RWPE1 (cell line): ENCODE measurements at regions of chr2 and their contacts with region 1.

Region 1: DNA sequence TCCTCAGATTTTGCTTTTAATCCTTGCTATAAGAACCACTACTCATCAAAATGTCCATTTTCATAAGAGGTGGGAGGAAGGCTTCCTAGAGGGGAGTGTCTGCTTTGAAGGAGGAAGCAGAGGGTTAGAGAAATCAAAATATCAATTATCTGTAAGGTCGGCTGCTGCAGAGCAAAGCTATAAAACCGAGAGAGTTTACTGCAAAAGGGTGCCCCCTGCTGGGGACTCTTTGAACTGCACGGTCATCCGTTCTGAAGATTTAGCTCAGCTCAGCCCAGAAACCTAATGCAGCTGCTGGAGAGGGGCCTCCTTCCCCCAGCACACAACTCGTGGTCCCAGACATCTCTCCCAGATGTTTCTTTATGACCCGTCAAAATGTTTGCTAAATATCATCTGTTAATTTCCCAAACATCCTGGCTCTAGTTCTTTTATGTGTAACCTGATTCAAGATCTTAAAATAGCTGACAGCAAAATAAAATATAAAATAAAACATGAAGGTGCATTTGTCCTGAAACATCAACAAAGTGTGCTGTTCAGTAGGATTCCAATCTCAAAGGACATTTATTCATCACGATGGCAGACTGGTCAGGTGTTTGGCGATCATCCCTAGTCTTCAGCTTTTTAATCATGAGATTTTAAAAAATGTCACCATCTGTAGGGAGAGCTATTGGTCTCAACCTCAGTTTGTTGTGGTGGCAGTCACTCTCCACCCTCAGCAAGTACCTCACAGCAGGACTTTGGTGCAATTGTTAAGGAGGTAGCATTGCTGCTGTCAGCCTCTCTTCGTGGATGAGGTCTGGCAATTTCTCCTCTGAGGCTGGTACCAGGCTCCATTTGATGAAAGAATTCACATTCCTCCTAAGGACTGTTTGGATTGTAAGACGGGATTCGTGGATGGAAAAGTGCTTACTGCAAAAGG is 185.9 kb downstream of the MTX2 start:
- DNase-seq: peak; percentile 46
- H3K27ac ChIP-seq: no peak overlapping the region
- CTCF ChIP-seq: peak; percentile 86

Region 2: GRCh38 chr2:176542476-176542875 is 87.3 kb after region 1 on chr2:
- CTCF ChIA-PET with region 1: no interaction called
- POLR2A ChIA-PET with region 1: no interaction called
- DNase-seq: no peak
- H3K27ac ChIP-seq: no peak overlapping the region
- CTCF ChIP-seq: no peak

Region 3: DNA sequence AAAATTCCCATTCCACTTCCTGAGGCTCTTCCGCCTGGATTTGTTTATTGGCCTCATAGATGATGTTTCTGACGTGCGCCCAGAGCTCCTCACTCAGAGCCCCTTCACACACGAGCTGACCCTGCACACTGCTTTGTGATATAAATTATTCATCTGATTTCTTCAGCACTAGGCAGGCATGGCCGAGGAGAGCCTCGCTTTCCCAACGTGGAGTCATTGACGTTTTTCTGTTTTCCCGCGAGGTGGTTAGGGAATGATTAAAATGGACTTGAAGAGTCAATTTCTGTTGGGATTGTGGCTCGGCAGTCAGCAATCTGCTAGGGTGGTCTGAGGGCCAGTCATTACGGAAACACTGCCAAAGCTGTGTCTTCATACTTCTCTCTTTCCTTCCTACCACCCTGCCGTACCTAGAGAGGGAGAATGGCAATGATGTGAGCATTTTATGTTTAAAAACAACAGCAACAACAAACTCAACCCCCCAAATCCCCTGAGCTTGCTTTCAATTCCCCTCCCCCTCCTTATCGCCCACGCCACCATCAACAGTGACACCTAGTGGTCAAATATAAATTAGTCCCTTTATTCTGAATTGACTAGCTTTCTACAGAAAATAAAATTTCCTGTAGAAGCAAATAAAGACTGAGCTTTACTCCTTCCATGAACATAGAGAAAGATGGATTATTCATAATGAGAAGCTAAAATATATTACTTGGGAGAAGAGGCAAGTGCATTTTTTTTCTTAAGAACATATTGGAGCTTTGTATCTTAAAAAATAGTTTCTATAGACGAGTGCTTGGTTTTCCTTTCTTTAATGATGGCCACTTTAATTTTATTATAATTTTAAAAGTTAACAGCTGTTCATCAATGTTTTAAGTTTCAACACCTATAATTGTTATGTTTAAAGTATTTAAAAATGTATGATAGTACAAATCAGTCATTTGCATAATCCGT is 99.2 kb after region 1 on chr2:
- CTCF ChIA-PET with region 1: interaction called, 14 read pairs
- POLR2A ChIA-PET with region 1: no interaction called
- DNase-seq: peak; percentile 71
- H3K27ac ChIP-seq: peak overlapping the region; percentile 75
- CTCF ChIP-seq: peak; percentile 71

Region 4: GRCh38 chr2:176613323-176613987 is 158.3 kb after region 1 on chr2:
- CTCF ChIA-PET with region 1: no interaction called
- POLR2A ChIA-PET with region 1: no interaction called
- DNase-seq: no peak
- H3K27ac ChIP-seq: no peak overlapping the region
- CTCF ChIP-seq: no peak